A549 (cell line): ENCODE measurements at regions of chr15 and their contacts with region 1.

Region 1: GRCh38 chr15:50908210-50909009 is at the start of gene AP4E1:
- DNase-seq: peak; percentile 75 to 96
- ATAC-seq: peak; percentile 88 to 90
- H3K4me3 ChIP-seq: peak within 1 kb of the TSS; percentile 81
- H3K27ac ChIP-seq: peak within 1 kb of the TSS; percentile 88 to 97
- H3K4me1 ChIP-seq: peaks cover 24% of the 10 kb centered on the region
- CTCF ChIP-seq: peak; percentile 98
- EP300 ChIP-seq: no peak
- POLR2A ChIP-seq: peak; percentile 24
- RAD21 ChIP-seq: peak; percentile 98 to 99
- polyA plus RNA-seq, gene AP4E1: 9.5 and 9.6 TPM in 2 replicates

Region 2: GRCh38 chr15:50627351-50628055 is 280.9 kb before region 1 on chr15:
- CTCF ChIA-PET with region 1: interaction called, 10 read pairs
- POLR2A ChIA-PET with region 1: no interaction called
- DNase-seq: no peak
- ATAC-seq: no peak
- H3K4me3 ChIP-seq: no peak overlapping the region
- H3K27ac ChIP-seq: no peak overlapping the region
- H3K4me1 ChIP-seq: peaks cover 4% of the 10 kb centered on the region; the same call in 1 of the 3 replicates
- CTCF ChIP-seq: no peak
- EP300 ChIP-seq: no peak
- POLR2A ChIP-seq: no peak
- RAD21 ChIP-seq: no peak

Region 3: DNA sequence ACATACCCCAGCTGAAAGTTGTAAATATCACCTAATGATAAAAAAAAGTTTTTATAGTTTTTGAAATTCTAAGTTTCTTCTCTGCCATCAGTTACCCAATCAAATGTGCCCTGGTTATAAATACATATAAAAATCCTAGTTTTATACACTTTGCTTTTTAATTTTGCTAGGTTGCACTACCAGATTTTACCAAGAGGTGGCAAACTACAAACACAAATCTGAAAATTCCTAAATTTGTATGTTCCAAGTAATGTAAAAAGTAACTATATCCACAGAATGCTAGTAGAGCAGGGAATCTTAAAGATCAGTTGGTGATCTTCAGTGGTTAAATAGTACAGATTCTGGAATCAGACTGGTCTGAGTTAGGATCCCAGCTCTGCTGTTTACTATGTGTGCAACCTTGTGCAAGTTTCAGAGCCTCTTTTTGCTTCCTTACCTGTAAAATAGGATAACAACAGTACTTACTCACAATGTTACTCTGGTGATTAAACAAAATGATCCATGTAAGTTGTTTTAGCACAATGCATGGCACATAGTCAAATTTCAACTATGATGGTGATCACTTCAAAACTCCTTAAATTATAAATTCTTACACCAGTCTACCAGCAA is 232.8 kb before region 1 on chr15:
- CTCF ChIA-PET with region 1: interaction called, 19 read pairs
- POLR2A ChIA-PET with region 1: no interaction called
- DNase-seq: peak; percentile 25 to 52
- ATAC-seq: no peak; a peak in 1 of 6 replicates
- H3K4me3 ChIP-seq: no peak overlapping the region
- H3K27ac ChIP-seq: peak overlapping the region in 1 of 2 experiments; percentile 23; a peak in 1 of 6 replicates
- H3K4me1 ChIP-seq: peaks cover 24% of the 10 kb centered on the region
- CTCF ChIP-seq: peak; percentile 88
- EP300 ChIP-seq: no peak
- POLR2A ChIP-seq: no peak
- RAD21 ChIP-seq: peak; percentile 76 to 87

Region 4: DNA sequence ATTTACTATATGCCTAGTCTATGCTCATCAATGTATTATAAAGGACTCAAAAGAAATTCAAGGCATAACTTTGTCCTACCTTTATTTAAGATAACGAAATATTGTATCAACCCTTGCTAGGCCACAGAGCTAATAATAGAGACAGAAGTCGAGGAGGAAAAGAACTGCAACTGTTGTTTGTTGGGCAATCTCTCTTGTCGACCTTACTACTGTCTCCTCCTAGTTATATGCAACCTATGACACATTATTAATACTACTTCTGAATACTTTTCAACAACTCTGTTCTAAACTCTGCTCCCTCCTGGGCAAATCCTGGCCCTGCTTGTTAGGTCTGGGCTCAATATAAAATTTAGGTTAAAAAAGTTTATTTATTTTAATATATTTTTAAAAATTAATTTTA is 167.5 kb before region 1 on chr15:
- CTCF ChIA-PET with region 1: no interaction called
- POLR2A ChIA-PET with region 1: no interaction called
- DNase-seq: no peak
- ATAC-seq: no peak
- H3K4me3 ChIP-seq: no peak overlapping the region
- H3K27ac ChIP-seq: no peak overlapping the region
- H3K4me1 ChIP-seq: peaks cover 3% of the 10 kb centered on the region; the same call in 1 of the 3 replicates
- CTCF ChIP-seq: no peak
- EP300 ChIP-seq: no peak
- POLR2A ChIP-seq: no peak
- RAD21 ChIP-seq: no peak

Region 5: GRCh38 chr15:50925281-50925680 is 16.9 kb after region 1 on chr15:
- CTCF ChIA-PET with region 1: interaction called, 13 read pairs
- POLR2A ChIA-PET with region 1: no interaction called
- DNase-seq: no peak
- ATAC-seq: no peak
- H3K4me3 ChIP-seq: no peak overlapping the region
- H3K27ac ChIP-seq: no peak overlapping the region
- H3K4me1 ChIP-seq: no peaks in the 10 kb centered on the region
- CTCF ChIP-seq: no peak
- EP300 ChIP-seq: no peak
- POLR2A ChIP-seq: no peak
- RAD21 ChIP-seq: no peak

Region 6: GRCh38 chr15:50993598-50993997 is 85.2 kb after region 1 on chr15:
- CTCF ChIA-PET with region 1: no interaction called
- POLR2A ChIA-PET with region 1: no interaction called
- DNase-seq: no peak
- ATAC-seq: no peak
- H3K4me3 ChIP-seq: no peak overlapping the region
- H3K27ac ChIP-seq: no peak overlapping the region
- H3K4me1 ChIP-seq: no peaks in the 10 kb centered on the region
- CTCF ChIP-seq: no peak
- EP300 ChIP-seq: no peak
- POLR2A ChIP-seq: no peak
- RAD21 ChIP-seq: no peak